ENCODE measurements at regions of chr11 and their contacts with region 1.

Region 1: DNA sequence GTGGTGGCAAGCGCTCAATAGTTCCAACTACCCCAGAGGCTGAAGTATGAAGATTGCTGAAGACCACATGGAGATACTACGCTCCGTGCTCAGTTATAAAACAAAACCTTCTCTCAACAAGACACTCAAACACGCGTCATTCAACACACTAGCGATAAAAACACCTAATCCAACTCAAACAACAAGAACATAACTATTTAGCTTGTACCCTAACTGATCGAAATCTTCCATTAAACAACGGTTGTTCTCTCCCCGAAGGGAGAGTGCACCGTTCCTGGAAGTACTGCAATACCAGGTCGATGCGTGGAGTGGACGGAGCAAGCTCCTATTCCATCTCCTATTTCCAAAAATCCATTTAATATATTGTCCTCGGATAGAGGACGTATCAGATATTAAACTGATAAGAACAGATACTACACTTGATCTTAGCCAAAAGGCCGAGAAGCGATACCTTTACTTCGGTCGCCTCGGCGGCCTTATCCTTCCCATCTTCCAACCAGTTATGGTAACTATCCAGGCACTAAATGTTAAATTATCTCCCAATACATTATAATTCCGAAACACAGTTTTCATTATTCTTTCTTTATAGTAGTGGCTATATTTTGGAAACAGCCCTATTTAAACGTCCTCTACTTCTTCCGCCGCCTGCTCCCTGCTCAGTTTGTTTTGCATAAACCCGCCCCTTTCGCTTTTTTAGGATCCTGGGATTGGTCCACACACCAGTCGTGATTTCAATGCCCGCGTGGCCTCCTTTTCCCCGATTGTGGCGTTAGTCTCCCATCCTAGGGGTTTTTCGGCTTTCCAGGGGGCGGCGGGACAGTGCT is 2.2 kb upstream of the WDR74 start:
- DNase-seq: peak; percentile 88
- ATAC-seq: peak; percentile 70
- H3K4me3 Mint-ChIP-seq: no peak overlapping the region
- H3K27ac Mint-ChIP-seq: no peak overlapping the region
- H3K4me1 Mint-ChIP-seq: peaks cover 22% of the 10 kb centered on the region
- H3K27me3 Mint-ChIP-seq: no peaks in the 10 kb centered on the region
- CTCF ChIP-seq: no peak

Region 2: GRCh38 chr11:62645956-62646824 is 195.4 kb before region 1 on chr11 and contains the start of gene GANAB:
- CTCF ChIA-PET with region 1: interaction called, 3 read pairs
- POLR2A ChIA-PET with region 1: interaction called, 10 read pairs
- intact Hi-C with region 1: no loop called
- DNase-seq: peak; percentile 100
- ATAC-seq: peak; percentile 98
- H3K4me3 Mint-ChIP-seq: peak within 1 kb of the TSS; percentile 100
- H3K27ac Mint-ChIP-seq: peak within 1 kb of the TSS; percentile 99
- H3K4me1 Mint-ChIP-seq: peaks cover 30% of the 10 kb centered on the region
- H3K27me3 Mint-ChIP-seq: no peaks in the 10 kb centered on the region
- CTCF ChIP-seq: no peak
- total RNA-seq, gene GANAB: 205 to 217 TPM

Region 3: GRCh38 chr11:62705880-62706849 is 135.4 kb before region 1 on chr11:
- CTCF ChIA-PET with region 1: no interaction called
- POLR2A ChIA-PET with region 1: interaction called, 41 read pairs
- intact Hi-C with region 1: no loop called
- DNase-seq: peak; percentile 97
- ATAC-seq: peak; percentile 77
- H3K4me3 Mint-ChIP-seq: peak overlapping the region; percentile 84
- H3K27ac Mint-ChIP-seq: peak overlapping the region; percentile 77
- H3K4me1 Mint-ChIP-seq: peaks cover 43% of the 10 kb centered on the region
- H3K27me3 Mint-ChIP-seq: no peaks in the 10 kb centered on the region
- CTCF ChIP-seq: no peak

Region 4: DNA sequence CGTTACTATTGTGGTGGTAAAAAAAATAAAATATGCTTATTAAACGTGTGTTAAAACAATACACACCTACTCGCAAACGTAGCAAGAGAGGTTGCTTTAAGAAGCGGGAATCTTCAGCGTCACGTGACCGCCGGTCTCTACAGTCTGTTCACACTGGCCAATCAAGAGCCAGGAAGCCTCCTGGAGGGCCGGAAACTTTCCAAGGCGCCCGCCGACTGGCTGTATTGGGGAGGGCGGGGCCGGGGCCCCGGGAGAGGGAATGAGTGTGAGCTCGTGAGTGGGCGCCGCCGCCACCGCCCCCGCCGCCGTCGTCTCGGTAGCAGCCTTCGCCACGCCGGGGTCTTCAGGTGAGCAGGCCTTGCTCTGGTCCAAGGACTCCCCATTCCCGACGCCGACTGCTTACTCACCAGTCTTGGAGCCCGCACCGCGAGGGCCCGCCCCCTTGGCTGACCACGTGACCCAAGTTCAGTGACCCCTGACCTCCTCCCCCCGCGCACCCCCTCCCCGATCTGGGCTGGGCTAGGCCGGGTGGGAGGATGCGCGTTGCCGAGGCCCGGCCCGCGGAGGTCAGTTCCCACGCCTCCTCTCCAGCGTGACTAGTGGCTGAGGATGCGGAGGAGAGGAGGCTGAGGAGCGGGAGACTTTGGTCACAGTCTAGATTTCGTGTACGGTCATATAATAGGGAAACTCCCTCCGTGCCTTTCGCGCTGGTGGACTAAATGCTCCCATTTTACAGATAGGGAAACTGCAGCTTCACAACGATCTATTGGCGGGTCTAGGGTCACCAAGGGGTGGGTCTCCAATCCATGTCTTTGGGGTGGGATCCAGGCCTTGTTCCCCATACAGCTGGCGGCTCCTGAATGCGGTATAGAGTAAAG is 70.2 kb before region 1 on chr11 and contains the start of gene TAF6L:
- CTCF ChIA-PET with region 1: no interaction called
- POLR2A ChIA-PET with region 1: interaction called, 35 read pairs
- intact Hi-C with region 1: no loop called
- DNase-seq: peak; percentile 97
- ATAC-seq: peak; percentile 88
- H3K4me3 Mint-ChIP-seq: peak within 1 kb of the TSS; percentile 81
- H3K27ac Mint-ChIP-seq: peak within 1 kb of the TSS; percentile 93
- H3K4me1 Mint-ChIP-seq: peaks cover 21% of the 10 kb centered on the region
- H3K27me3 Mint-ChIP-seq: no peaks in the 10 kb centered on the region
- CTCF ChIP-seq: no peak
- total RNA-seq, gene TAF6L: 13.7 to 16.7 TPM

Region 5: GRCh38 chr11:62805076-62805892 is 36.3 kb before region 1 on chr11 and contains the start of gene NXF1:
- CTCF ChIA-PET with region 1: interaction called, 4 read pairs
- POLR2A ChIA-PET with region 1: interaction called, 60 read pairs
- intact Hi-C with region 1: no loop called
- DNase-seq: peak; percentile 95
- ATAC-seq: peak; percentile 85
- H3K4me3 Mint-ChIP-seq: peak within 1 kb of the TSS; percentile 95
- H3K27ac Mint-ChIP-seq: peak within 1 kb of the TSS; percentile 98
- H3K4me1 Mint-ChIP-seq: peaks cover 38% of the 10 kb centered on the region
- H3K27me3 Mint-ChIP-seq: no peaks in the 10 kb centered on the region
- CTCF ChIP-seq: peak; percentile 31
- total RNA-seq, gene NXF1: 80.9 to 90.0 TPM

Region 6: DNA sequence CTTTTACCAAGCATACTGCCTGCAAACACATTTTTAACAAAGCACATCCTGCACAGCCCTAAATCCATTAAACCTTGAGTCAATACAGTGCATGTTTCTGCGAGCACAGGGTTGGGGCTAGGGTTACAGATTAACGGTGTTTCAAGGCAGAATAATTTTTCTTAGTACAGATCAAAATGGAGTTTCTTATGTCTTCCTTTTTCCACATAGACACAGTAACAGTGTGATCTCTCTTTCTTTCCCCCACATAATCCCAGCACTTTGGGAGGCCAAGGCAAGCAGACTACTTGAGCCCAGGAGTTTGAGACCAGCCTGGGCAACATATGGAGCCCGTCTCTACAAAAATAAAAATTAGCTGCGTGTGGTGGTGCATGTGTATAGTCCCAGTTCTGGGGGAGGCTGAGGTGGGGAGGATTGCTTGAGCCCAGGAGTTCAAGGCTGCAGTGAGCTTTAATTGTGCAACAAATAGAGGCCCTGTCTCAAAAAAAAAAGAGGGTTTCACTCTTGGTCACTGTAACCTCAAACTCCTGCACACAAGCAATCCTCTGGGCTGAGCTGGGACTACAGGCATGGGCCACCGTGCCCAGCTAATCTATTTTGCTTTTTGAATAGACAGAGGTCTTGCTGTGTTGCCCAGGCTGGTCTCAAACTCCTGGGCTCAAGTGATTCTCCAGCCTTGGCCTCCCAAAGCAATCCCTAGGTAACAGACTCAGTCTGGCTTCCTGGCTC is 19.4 kb after region 1 on chr11:
- CTCF ChIA-PET with region 1: interaction called, 3 read pairs
- POLR2A ChIA-PET with region 1: interaction called, 997 read pairs
- intact Hi-C with region 1: no loop called
- DNase-seq: no peak
- ATAC-seq: no peak
- H3K4me3 Mint-ChIP-seq: no peak overlapping the region
- H3K27ac Mint-ChIP-seq: peak overlapping the region; percentile 61
- H3K4me1 Mint-ChIP-seq: peaks cover 41% of the 10 kb centered on the region
- H3K27me3 Mint-ChIP-seq: no peaks in the 10 kb centered on the region
- CTCF ChIP-seq: no peak

Region 7: DNA sequence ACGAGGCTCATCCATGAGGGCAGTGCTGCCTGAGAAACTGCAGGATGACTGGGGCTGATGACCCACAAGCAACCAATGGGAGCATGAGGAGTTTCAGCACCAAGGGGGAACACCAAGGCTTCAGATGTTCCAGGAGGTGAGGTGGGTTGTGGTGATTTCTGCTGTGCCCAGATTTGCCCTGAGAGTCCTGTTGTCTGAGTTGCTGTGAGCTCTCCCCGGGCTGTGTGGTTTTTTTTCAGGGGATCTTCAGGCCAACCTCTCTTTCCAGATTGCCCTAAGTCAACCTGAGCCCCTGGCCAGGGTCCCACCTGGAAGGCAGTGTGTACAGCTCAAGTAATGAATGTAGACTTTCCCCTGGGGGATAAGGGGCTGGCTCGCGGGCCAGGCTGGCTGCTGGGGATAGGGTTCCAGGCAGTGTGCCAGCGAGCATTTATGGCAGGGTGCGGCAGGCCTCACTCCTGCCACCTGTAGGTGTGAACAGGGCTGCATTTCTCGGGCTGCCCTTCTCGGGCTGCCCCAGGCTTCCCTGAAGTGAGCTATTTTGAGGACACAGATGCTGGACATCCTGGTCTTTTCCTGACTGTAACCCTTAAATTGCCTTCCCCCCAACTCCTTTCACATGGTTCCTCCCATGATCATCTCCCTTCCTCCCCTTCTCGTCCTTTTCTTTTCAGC is 133.4 kb after region 1 on chr11:
- CTCF ChIA-PET with region 1: no interaction called
- POLR2A ChIA-PET with region 1: no interaction called
- intact Hi-C with region 1: no loop called
- DNase-seq: peak; percentile 49
- ATAC-seq: peak; percentile 79
- H3K4me3 Mint-ChIP-seq: no peak overlapping the region
- H3K27ac Mint-ChIP-seq: no peak overlapping the region
- H3K4me1 Mint-ChIP-seq: no peaks in the 10 kb centered on the region
- H3K27me3 Mint-ChIP-seq: peaks cover 16% of the 10 kb centered on the region
- CTCF ChIP-seq: peak; percentile 55

Measured in activated CD8-positive, alpha-beta T cell treated with anti-CD3 and anti-CD28 coated beads for 36 hours (primary cell).